ENCODE measurements at regions of chr3 and their contacts with region 1.

Region 1: DNA sequence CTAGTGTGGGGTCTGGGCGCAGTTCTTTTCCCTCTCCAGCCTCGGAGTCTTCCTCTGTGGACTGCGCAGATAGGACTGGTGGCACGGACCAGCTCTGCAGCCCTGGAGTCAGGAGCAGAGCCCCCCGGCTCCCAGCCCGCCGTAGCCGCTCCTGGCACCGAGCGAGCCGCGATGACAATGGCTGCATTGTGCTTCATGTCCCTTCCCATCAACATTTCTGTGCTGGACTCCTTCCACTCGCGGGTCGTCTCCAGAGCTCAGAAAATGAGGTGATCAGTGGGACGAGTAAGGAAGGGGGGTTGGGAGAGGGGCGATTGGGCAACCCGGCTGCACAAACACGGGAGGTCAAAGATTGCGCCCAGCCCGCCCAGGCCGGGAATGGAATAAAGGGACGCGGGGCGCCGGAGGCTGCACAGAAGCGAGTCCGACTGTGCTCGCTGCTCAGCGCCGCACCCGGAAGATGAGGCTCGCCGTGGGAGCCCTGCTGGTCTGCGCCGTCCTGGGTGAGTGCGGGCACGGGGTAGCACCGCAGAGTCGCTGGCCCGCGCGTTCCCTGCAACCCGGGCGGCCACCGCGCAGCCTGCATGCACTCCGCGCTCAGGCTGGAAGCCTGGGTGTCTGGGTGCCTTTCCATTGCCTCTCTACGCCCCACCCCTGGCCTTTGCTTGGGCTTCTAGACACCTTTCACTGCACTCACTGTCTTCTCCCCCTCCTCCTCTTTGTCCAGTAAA is at the start of gene TF:
- DNase-seq: no peak
- ATAC-seq: peak; percentile 49
- H3K4me3 ChIP-seq: peak within 1 kb of the TSS in 1 of 2 experiments; percentile 23; a peak in 2 of 4 replicates
- H3K27ac ChIP-seq: no peak within 1 kb of the TSS
- H3K4me1 ChIP-seq: 0 out of 2 replicates have a peak, but pooled peaks cover 9% of the 10 kb centered on the region
- H3K27me3 ChIP-seq: no peaks in the 10 kb centered on the region; the same call in 1 of the 2 replicates
- CTCF ChIP-seq: no peak
- total RNA-seq, gene TF: 9.5 TPM

Region 2: GRCh38 chr3:133792171-133792763 is 46.1 kb after region 1 on chr3:
- CTCF ChIA-PET with region 1: no interaction called
- POLR2A ChIA-PET with region 1: no interaction called
- in situ Hi-C with region 1: no loop called
- intact Hi-C with region 1: loop called (anchors 2 kb)
- DNase-seq: no peak
- ATAC-seq: no peak
- H3K4me3 ChIP-seq: no peak overlapping the region
- H3K27ac ChIP-seq: no peak overlapping the region
- H3K4me1 ChIP-seq: no peaks in the 10 kb centered on the region
- H3K27me3 ChIP-seq: no peaks in the 10 kb centered on the region
- CTCF ChIP-seq: no peak